Thyroid gland (tissue), 4 donors: ENCODE measurements at regions of chr6 and their contacts with region 1.

Region 1: DNA sequence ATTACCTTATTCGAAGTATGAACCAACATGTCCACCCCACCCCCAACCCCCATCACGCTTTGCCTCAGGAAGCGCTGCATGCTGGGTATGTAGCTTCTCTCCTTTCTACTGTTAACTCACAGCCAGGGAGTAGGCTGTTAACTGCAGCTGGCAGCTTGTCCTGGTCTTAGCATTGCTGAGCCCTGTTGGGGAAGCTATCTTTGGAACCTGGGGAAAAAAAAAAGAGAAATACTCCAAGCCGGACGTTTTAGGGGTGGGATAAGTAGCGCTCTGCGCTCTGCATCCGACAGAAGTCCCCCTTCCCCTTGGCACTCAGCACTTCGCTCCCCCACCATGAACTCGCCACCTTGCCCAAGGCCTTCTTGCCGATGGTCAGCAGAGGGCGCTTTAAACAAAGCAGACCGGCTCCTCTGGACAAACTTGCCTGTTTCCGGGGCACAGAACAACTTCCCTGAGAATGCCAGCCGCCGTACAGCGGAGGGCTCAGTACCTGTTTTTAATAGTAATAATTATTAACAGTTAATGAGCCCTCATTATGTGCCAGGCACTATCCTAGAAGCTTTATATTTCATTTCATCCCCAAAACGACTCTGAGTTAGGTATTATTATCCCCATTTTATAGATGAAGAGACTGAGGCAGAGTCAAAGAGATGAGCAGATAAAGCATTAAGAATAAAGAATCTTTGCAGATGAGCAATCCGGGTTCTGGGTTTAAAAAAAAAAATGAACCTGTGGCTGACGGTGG is 35.2 kb upstream of the MDFI start:
- DNase-seq: peak; percentile 77 to 85
- H3K4me3 ChIP-seq: no peak overlapping the region
- H3K27ac ChIP-seq: no peak overlapping the region
- H3K4me1 ChIP-seq: peaks cover 0 to 11% of the 10 kb centered on the region in 2 donors
- H3K27me3 ChIP-seq: no peaks in the 10 kb centered on the region
- CTCF ChIP-seq: peak; percentile 54 to 90 (median 82)
- POLR2A ChIP-seq: no peak

Region 2: GRCh38 chr6:41683510-41684310 is 80.7 kb after region 1 on chr6:
- intact Hi-C with region 1: loop called (anchors 5 kb)
- DNase-seq: peak; percentile 81 to 84
- H3K4me3 ChIP-seq: peak overlapping the region in 1 of 3 donors; percentile 12
- H3K27ac ChIP-seq: no peak overlapping the region
- H3K4me1 ChIP-seq: peaks cover 13 to 41% of the 10 kb centered on the region in 2 donors
- H3K27me3 ChIP-seq: no peaks in the 10 kb centered on the region
- CTCF ChIP-seq: peak; percentile 64 to 94 (median 84)
- POLR2A ChIP-seq: no peak